ENCODE measurements at regions of chr19 and their contacts with region 1.

Region 1: GRCh38 chr19:12564016-12564664 is 12.9 kb upstream of the ZNF564 start:
- DNase-seq: peak; percentile 93
- H3K4me3 ChIP-seq: no peak overlapping the region
- H3K27ac ChIP-seq: no peak overlapping the region
- H3K4me1 ChIP-seq: 0 out of 2 replicates have a peak, but pooled peaks cover 3% of the 10 kb centered on the region
- H3K27me3 ChIP-seq: no peaks in the 10 kb centered on the region

Region 2: GRCh38 chr19:12669270-12670158 is 105.4 kb after region 1 on chr19:
- in situ Hi-C with region 1: loop called (anchors 10 kb)
- DNase-seq: peak; percentile 93
- H3K4me3 ChIP-seq: peak overlapping the region; percentile 82
- H3K27ac ChIP-seq: peak overlapping the region; percentile 93
- H3K4me1 ChIP-seq: peaks cover 26% of the 10 kb centered on the region
- H3K27me3 ChIP-seq: no peaks in the 10 kb centered on the region